Colonic mucosa (tissue), 4 donors: ENCODE measurements at regions of chr14 and their contacts with region 1.

Region 1: GRCh38 chr14:34781242-34781641 is 66.8 kb upstream of the CFL2 start:
- DNase-seq: no peak
- H3K4me3 ChIP-seq: no peak overlapping the region
- H3K27ac ChIP-seq: no peak overlapping the region
- H3K4me1 ChIP-seq: no peaks in the 10 kb centered on the region
- H3K27me3 ChIP-seq: no peaks in the 10 kb centered on the region
- CTCF ChIP-seq: no peak

Region 2: DNA sequence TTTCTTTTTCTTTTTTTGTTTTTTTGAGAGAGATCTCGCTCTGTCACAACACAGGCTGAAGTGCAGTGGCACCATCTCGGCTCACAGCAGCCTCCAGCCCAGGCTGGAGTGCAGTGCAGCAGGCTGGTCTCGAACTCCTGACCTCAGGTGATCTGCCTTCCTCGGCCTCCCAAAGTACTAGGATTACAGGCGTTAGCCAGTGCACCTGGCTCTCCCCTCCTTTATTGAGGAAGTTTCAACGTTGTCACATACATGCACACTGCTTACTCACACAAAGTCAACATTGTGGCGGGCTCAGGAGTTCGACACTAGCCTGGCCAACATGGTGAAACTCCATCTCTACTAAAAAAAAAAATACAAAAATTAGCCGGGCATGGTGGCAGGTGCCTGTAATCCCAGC is 273.8 kb before region 1 on chr14:
- intact Hi-C with region 1: no loop called
- DNase-seq: peak; percentile 51
- H3K4me3 ChIP-seq: no peak overlapping the region
- H3K27ac ChIP-seq: peak overlapping the region; percentile 56
- H3K4me1 ChIP-seq: no peaks in the 10 kb centered on the region
- H3K27me3 ChIP-seq: no peaks in the 10 kb centered on the region
- CTCF ChIP-seq: no peak

Region 3: DNA sequence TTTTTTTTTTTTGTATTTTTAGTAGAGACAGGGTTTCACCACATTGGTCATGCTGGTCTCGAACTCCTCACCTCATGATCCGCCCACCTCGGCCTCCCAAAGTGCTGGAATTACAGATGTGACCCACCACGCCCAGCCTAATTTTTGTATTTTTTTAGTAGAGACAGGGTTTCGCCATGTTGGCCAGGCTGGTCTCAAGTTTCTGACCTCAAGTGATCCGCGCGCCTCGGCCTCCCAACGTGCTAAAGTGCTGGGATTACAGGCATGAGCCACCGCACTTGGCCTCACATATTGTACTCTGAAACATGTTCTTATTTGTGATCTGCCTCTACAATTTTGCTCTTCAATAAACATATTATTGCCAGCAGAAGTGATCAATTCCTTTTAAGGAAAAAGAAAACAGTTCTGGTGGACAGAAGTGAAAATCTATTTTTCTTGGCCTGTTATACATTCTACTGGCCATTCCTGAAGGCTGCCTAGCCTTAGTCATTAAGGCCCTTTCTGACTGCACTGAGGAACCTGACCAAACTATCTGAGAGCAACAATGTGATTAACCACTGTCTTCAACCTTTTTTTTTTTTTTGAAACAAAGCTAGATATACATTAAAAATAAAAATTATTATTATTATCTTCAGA is 187.4 kb before region 1 on chr14:
- intact Hi-C with region 1: loop called (anchors 10 kb)
- DNase-seq: no peak
- H3K4me3 ChIP-seq: no peak overlapping the region
- H3K27ac ChIP-seq: no peak overlapping the region
- H3K4me1 ChIP-seq: no peaks in the 10 kb centered on the region
- H3K27me3 ChIP-seq: no peaks in the 10 kb centered on the region
- CTCF ChIP-seq: no peak

Region 4: DNA sequence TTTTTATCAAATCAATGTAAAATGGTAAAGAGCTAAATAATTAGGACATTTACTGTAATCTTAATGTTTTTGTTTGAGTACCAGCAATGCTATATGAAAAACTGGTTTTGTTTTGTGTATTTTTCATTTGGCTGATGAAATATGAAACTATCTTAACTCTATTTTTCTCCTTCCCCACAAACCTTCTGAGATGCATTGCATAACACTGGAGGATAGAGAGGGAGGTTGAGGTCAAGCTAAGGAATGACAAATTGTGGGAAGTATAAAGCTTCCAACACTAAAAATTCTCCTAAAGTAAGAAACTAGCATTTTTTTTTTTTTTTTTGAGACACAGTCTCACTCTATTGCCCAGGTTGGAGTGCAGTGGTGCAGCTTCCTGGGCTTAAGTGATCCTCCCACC is 170.0 kb after region 1 on chr14:
- intact Hi-C with region 1: no loop called
- DNase-seq: no peak
- H3K4me3 ChIP-seq: no peak overlapping the region
- H3K27ac ChIP-seq: no peak overlapping the region
- H3K4me1 ChIP-seq: no peaks in the 10 kb centered on the region
- H3K27me3 ChIP-seq: no peaks in the 10 kb centered on the region
- CTCF ChIP-seq: no peak